GM12878 (cell line): ENCODE measurements at regions of chr15 and their contacts with region 1.

Region 1: GRCh38 chr15:25947323-25948314 is 84.5 kb upstream of the ATP10A start:
- DNase-seq: no peak
- ATAC-seq: no peak
- H3K4me3 ChIP-seq: no peak overlapping the region
- H3K27ac ChIP-seq: no peak overlapping the region
- H3K4me1 ChIP-seq: no peaks in the 10 kb centered on the region
- H3K27me3 ChIP-seq: no peaks in the 10 kb centered on the region
- CTCF ChIP-seq: no peak
- EP300 ChIP-seq: no peak
- POLR2A ChIP-seq: no peak
- RAD21 ChIP-seq: no peak

Region 2: GRCh38 chr15:25710184-25710583 is 237.4 kb before region 1 on chr15:
- CTCF ChIA-PET with region 1: no interaction called
- POLR2A ChIA-PET with region 1: no interaction called
- RAD21 ChIA-PET with region 1: no interaction called
- SMC1A ChIA-PET with region 1: no interaction called
- in situ Hi-C with region 1: loop called (anchors 10 kb)
- intact Hi-C with region 1: no loop called
- DNase-seq: no peak
- ATAC-seq: peak; percentile 87
- H3K4me3 ChIP-seq: no peak overlapping the region
- H3K27ac ChIP-seq: no peak overlapping the region
- H3K4me1 ChIP-seq: no peaks in the 10 kb centered on the region
- H3K27me3 ChIP-seq: no peaks in the 10 kb centered on the region
- CTCF ChIP-seq: peak; percentile 34 to 65 (median 43); a peak in 4 of 6 replicates
- EP300 ChIP-seq: no peak
- POLR2A ChIP-seq: no peak
- RAD21 ChIP-seq: no peak

Region 3: GRCh38 chr15:25883463-25884259 is 64.0 kb before region 1 on chr15:
- CTCF ChIA-PET with region 1: no interaction called
- POLR2A ChIA-PET with region 1: no interaction called
- RAD21 ChIA-PET with region 1: no interaction called
- SMC1A ChIA-PET with region 1: no interaction called
- in situ Hi-C with region 1: loop called (anchors 10 kb)
- intact Hi-C with region 1: no loop called
- DNase-seq: no peak
- ATAC-seq: no peak
- H3K4me3 ChIP-seq: no peak overlapping the region
- H3K27ac ChIP-seq: no peak overlapping the region
- H3K4me1 ChIP-seq: no peaks in the 10 kb centered on the region
- H3K27me3 ChIP-seq: no peaks in the 10 kb centered on the region
- CTCF ChIP-seq: no peak
- EP300 ChIP-seq: no peak
- POLR2A ChIP-seq: no peak
- RAD21 ChIP-seq: no peak

Region 4: DNA sequence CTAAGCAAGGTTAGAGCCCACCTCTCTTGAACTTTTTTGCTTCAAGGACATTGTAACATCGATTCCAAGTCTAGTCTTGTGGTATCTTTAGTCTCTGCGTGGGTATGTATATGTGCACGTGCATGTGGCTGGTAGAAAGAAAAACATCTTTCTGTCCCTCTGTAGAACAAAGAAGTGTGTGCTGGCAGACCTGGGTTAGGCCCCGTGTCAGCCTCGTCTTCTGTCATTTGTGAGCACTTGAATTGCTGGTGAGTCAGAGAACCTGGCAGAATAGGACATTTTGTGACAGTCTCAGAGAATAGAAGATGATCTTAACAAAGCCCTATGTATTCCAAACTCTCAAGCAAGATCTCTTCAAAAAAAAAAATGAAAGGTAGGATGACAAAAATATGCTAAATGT is 17.7 kb after region 1 on chr15:
- CTCF ChIA-PET with region 1: no interaction called
- POLR2A ChIA-PET with region 1: no interaction called
- RAD21 ChIA-PET with region 1: no interaction called
- SMC1A ChIA-PET with region 1: no interaction called
- in situ Hi-C with region 1: no loop called
- intact Hi-C with region 1: no loop called
- DNase-seq: no peak
- ATAC-seq: no peak
- H3K4me3 ChIP-seq: no peak overlapping the region
- H3K27ac ChIP-seq: no peak overlapping the region
- H3K4me1 ChIP-seq: no peaks in the 10 kb centered on the region
- H3K27me3 ChIP-seq: no peaks in the 10 kb centered on the region
- CTCF ChIP-seq: no peak
- EP300 ChIP-seq: no peak
- POLR2A ChIP-seq: no peak
- RAD21 ChIP-seq: no peak